ENCODE measurements at regions of chr1 and their contacts with region 1.

Region 1: GRCh38 chr1:201970334-201971159 is 11.9 kb upstream of the RNPEP start:
- DNase-seq: no peak
- H3K4me3 ChIP-seq: no peak overlapping the region
- H3K4me1 ChIP-seq: no peaks in the 10 kb centered on the region
- H3K27me3 ChIP-seq: no peaks in the 10 kb centered on the region

Region 2: GRCh38 chr1:201538612-201539551 is 431.7 kb before region 1 on chr1 and contains the start of gene NAV1:
- in situ Hi-C with region 1: no loop called
- DNase-seq: peak in 1 of 2 experiments; percentile 69
- H3K4me3 ChIP-seq: peak within 1 kb of the TSS; percentile 35
- H3K4me1 ChIP-seq: 0 out of 2 replicates have a peak, but pooled peaks cover 6% of the 10 kb centered on the region
- H3K27me3 ChIP-seq: peaks cover 20% of the 10 kb centered on the region

Region 3: GRCh38 chr1:201890223-201890622 is 80.3 kb before region 1 on chr1:
- in situ Hi-C with region 1: loop called (anchors 5 kb)
- DNase-seq: no peak
- H3K4me3 ChIP-seq: no peak overlapping the region
- H3K4me1 ChIP-seq: no peaks in the 10 kb centered on the region
- H3K27me3 ChIP-seq: peaks cover 12% of the 10 kb centered on the region; the same call in 1 of the 2 replicates